BJ (cell line): ENCODE measurements at regions of chr21 and their contacts with region 1.

Region 1: GRCh38 chr21:17598437-17598836 is 14.3 kb downstream of the BTG3 start:
- DNase-seq: no peak
- H3K4me3 ChIP-seq: no peak overlapping the region
- H3K27me3 ChIP-seq: no peaks in the 10 kb centered on the region
- CTCF ChIP-seq: no peak

Region 2: DNA sequence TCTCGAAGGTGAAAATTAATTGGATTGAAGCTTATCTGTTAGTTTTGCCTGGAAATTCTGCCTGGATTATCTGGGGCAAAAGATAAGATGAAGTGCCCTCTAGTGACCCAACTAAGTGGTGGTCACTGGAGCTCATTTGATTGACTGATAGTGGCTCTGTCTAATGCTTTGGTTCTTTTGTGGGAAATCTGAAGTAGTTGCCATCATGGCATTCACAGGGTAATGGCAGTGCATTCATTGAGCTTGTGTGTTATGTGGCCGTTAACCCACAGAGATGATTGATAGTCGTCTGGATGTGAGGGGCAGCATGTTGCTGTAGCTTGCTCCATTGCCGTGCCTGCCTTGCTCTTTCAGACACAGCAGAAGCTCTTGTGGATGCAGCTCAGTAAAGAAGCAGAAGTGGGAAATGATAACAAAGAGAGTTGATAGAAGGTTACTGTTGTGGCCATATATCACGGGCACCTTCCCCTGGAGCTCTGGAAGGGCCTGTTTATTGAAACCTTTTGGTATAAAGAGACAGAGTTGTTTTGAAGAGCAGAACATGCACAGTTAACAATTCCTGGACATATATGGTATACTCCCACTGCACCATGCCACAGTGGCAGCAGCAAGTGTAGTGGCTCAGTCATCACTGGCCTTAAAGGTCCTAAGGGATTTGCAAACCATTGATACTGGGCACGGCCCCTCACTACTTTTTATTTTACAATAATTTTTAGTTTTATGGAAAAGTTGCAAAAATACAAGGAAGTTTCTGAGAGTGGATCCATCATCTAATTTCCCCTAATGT is 43.6 kb before region 1 on chr21:
- CTCF ChIA-PET with region 1: no interaction called
- POLR2A ChIA-PET with region 1: no interaction called
- DNase-seq: no peak
- H3K4me3 ChIP-seq: no peak overlapping the region
- H3K27me3 ChIP-seq: 0 out of 2 replicates have a peak, but pooled peaks cover 2% of the 10 kb centered on the region
- CTCF ChIP-seq: peak; percentile 34; the same call in 1 of the 2 replicates

Region 3: GRCh38 chr21:17570786-17571185 is 27.7 kb before region 1 on chr21:
- CTCF ChIA-PET with region 1: no interaction called
- POLR2A ChIA-PET with region 1: no interaction called
- DNase-seq: no peak
- H3K4me3 ChIP-seq: no peak overlapping the region
- H3K27me3 ChIP-seq: no peaks in the 10 kb centered on the region
- CTCF ChIP-seq: no peak

Region 4: GRCh38 chr21:17585875-17586450 is 12.5 kb before region 1 on chr21:
- CTCF ChIA-PET with region 1: interaction called, 13 read pairs
- POLR2A ChIA-PET with region 1: no interaction called
- DNase-seq: no peak
- H3K4me3 ChIP-seq: no peak overlapping the region
- H3K27me3 ChIP-seq: no peaks in the 10 kb centered on the region
- CTCF ChIP-seq: peak; percentile 58